Esophagus muscularis mucosa (tissue), 4 donors: ENCODE measurements at regions of chr1 and their contacts with region 1.

Region 1: GRCh38 chr1:200738740-200739498 is at the start of gene CAMSAP2:
- DNase-seq: peak; percentile 97
- H3K4me3 ChIP-seq: peak within 1 kb of the TSS; percentile 86 to 99 (median 94)
- H3K27ac ChIP-seq: peak within 1 kb of the TSS; percentile 99 to 100 (median 100)
- H3K4me1 ChIP-seq: peaks cover 24 to 43% (median 40%) of the 10 kb centered on the region in 4 donors
- H3K27me3 ChIP-seq: no peaks in the 10 kb centered on the region
- CTCF ChIP-seq: no peak
- EP300 ChIP-seq: no peak
- POLR2A ChIP-seq: peak; percentile 84
- total RNA-seq, gene CAMSAP2: 34.6 to 44.0 (median 38.4) TPM

Region 2: DNA sequence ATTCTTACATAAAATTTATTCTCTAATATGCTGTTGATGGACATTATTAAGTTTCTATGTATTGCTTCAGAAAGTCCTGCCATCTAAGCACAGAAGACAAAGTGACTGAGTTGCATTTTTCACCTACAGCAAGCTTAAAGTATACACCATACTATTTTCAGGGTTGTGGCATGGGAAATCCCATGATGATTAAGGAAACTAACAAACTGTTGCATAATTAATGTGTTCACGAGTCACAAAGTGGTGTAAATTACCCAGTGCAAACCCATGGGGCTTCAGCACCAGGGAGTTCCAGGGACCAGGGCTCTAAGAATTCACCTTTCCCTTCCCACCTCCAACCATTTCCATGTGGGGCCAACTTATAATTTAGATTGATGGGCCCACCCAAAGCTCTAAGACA is 793.3 kb before region 1 on chr1:
- intact Hi-C with region 1: no loop called
- DNase-seq: no peak
- H3K4me3 ChIP-seq: no peak overlapping the region
- H3K27ac ChIP-seq: no peak overlapping the region
- H3K4me1 ChIP-seq: no peaks in the 10 kb centered on the region
- H3K27me3 ChIP-seq: no peaks in the 10 kb centered on the region
- CTCF ChIP-seq: no peak
- EP300 ChIP-seq: no peak
- POLR2A ChIP-seq: no peak

Region 3: DNA sequence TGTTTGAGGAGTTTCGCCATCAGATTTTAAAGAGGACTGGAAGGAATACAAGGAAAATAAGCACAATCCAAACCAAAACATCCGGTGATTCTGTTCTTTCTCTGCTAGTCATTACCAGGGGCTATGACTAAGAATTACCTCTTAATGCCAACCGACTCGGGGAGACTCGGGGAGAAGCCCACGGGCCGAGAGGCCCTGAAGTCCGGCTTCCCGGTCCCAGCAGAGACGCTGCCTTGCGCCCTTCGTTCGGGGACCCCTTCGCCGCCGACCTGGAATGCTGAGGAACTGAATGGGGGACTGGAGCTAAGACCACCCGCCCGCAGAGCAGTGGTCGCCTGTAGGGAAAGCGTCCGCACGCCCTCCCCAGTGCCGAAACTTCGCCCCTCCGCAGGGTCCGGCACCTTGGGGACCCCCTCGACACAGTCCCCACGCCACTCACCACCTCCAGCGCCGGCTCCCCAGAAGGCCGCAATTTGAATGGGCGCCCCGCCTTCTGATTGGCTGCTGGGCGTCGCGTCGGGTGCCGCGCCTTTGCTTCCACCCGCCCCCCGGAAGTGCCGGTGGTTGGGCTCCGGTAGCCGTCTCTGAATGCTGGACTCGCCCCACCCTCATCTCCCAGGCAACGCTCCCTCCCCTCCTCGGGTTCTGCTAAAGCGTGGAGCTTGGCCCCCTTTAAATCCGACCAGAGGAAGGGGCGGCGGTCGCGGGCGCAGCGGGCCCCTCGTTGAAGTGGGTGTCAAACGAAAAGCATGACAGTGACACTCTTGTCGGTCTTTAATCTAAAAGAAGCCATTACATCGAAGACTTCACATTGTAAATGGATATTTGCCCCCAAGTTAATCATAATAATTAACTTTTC is 118.4 kb before region 1 on chr1 and contains the start of gene KIF14:
- intact Hi-C with region 1: loop called (anchors 5 kb)
- DNase-seq: peak; percentile 97
- H3K4me3 ChIP-seq: peak within 1 kb of the TSS; percentile 63 to 77 (median 71)
- H3K27ac ChIP-seq: peak within 1 kb of the TSS; percentile 29 to 65 (median 50)
- H3K4me1 ChIP-seq: peaks cover 12 to 34% (median 22%) of the 10 kb centered on the region in 4 donors
- H3K27me3 ChIP-seq: peaks cover 0 to 4% (median 0%) of the 10 kb centered on the region in 4 donors
- CTCF ChIP-seq: no peak
- EP300 ChIP-seq: no peak
- POLR2A ChIP-seq: no peak
- total RNA-seq, gene KIF14: under 0.01 to 0.17 (median 0.17) TPM in 3 of 4 donors, not detected in the other

Region 4: DNA sequence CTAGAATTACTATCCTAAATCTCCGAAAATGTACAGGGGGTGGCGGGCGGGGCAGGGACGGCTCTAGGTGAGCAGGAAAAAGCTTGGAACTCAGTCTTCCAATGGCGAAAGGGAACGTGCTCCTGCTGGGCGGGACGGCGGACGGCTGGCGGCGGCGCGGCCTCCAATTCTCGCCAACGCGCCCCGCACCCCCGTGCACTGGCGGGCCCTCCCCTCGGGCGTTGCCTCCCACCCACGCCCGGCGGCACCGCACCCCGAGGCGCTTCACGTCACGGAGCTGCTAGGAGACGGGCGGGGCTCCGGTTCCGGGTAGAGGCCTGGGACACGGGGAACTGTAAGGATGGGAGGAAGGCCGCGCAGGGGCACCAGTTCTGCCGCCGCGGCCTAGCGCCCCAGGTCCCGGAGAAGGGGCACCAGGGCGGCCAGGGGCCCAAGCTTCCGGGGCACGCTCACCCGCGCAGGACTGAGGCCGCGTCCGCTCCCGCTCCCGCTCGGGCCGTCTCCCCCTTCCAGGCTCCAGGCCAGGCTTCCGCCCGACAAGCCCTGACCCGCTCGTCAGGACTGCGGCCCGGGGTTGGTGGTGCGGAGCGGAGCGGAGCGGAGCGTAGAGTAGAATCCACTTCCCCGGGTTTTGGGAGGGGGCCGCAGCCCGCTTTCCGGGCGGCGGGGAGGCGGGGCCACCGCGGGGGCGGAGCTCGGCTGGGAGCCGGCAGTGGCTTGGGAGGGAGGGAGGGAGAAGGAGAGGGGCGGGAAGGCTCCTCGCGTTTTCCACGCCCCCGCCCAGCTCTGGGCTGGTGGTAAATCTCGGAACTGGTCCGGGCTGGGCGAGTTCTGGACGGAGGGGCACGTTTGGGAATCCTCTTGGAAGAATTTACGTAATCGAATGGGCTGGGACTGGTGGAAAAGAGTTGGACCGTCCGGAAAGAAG is 69.3 kb before region 1 on chr1 and contains the start of gene DDX59:
- intact Hi-C with region 1: loop called (anchors 2 kb)
- DNase-seq: peak; percentile 99
- H3K4me3 ChIP-seq: peak within 1 kb of the TSS; percentile 71 to 95 (median 80)
- H3K27ac ChIP-seq: peak within 1 kb of the TSS; percentile 95 to 100 (median 98)
- H3K4me1 ChIP-seq: peaks cover 18 to 47% (median 39%) of the 10 kb centered on the region in 4 donors
- H3K27me3 ChIP-seq: no peaks in the 10 kb centered on the region
- CTCF ChIP-seq: no peak
- EP300 ChIP-seq: peak; percentile 92
- POLR2A ChIP-seq: peak; percentile 95
- total RNA-seq, gene DDX59: 18.1 to 30.0 (median 21.7) TPM

Region 5: GRCh38 chr1:200774735-200775444 is 36.0 kb after region 1 on chr1:
- intact Hi-C with region 1: loop called (anchors 5 kb)
- DNase-seq: no peak
- H3K4me3 ChIP-seq: no peak overlapping the region
- H3K27ac ChIP-seq: peak overlapping the region; percentile 23 to 72 (median 62)
- H3K4me1 ChIP-seq: peaks cover 34 to 48% (median 39%) of the 10 kb centered on the region in 4 donors
- H3K27me3 ChIP-seq: no peaks in the 10 kb centered on the region
- CTCF ChIP-seq: no peak
- EP300 ChIP-seq: peak; percentile 37
- POLR2A ChIP-seq: no peak

Region 6: GRCh38 chr1:200802865-200803512 is 64.1 kb after region 1 on chr1:
- intact Hi-C with region 1: loop called (anchors 5 kb)
- DNase-seq: peak; percentile 93
- H3K4me3 ChIP-seq: no peak overlapping the region
- H3K27ac ChIP-seq: peak overlapping the region in 1 of 4 donors; percentile 14
- H3K4me1 ChIP-seq: peaks cover 0 to 13% (median 10%) of the 10 kb centered on the region in 4 donors
- H3K27me3 ChIP-seq: no peaks in the 10 kb centered on the region
- CTCF ChIP-seq: peak; percentile 92 to 95 (median 93)
- EP300 ChIP-seq: no peak
- POLR2A ChIP-seq: no peak